OCI-LY7 (cell line): ENCODE measurements at regions of chr22 and their contacts with region 1.

Region 1: GRCh38 chr22:39532215-39533071 is at the start of gene RPS19BP1:
- DNase-seq: peak; percentile 100
- H3K4me3 ChIP-seq: peak within 1 kb of the TSS; percentile 97
- H3K27ac ChIP-seq: peak within 1 kb of the TSS; percentile 66
- H3K4me1 ChIP-seq: peaks cover 57% of the 10 kb centered on the region
- CTCF ChIP-seq: no peak
- total RNA-seq, gene RPS19BP1: 148 and 185 TPM in 2 replicates

Region 2: DNA sequence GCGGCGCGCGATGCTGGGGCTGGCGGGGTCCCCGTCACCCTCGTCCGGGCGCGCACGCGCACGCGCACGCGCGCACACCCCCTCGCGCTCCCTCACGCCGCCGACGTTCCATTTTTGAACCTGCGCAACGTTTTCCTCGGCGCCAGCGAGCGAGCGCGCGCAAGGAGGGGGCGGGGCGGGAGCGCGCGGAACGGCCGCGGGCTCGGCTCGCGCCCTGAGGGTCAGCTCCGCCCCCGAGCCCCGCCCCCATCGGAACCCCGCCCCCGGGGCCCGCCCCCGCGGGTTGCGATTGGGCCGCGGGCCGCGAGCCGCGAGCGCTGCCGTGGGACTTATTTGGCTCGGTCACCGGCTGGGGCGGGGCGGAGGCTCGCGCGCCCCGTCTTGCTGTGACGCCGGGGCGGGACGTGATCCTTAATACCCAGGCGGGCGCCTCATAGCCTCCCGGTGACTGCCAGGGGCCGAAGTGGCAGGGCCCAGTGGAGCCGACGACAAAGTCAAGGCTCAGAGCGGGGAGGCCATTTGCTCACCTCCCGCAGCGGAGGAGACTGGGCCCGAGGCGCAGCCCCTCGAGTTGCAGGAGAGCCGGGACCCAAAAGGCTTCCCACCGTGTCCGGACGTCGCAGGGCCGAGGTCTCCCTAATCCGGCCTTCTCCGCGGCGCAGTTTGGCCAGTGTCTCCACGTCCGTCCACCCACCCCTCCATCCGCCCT is 379.8 kb before region 1 on chr22 and contains the start of gene CBX7:
- CTCF ChIA-PET with region 1: no interaction called
- POLR2A ChIA-PET with region 1: interaction called, 3 read pairs
- intact Hi-C with region 1: loop called (anchors 5 kb)
- DNase-seq: peak; percentile 91
- H3K4me3 ChIP-seq: peak within 1 kb of the TSS; percentile 74
- H3K27ac ChIP-seq: peak within 1 kb of the TSS; percentile 56
- H3K4me1 ChIP-seq: peaks cover 45% of the 10 kb centered on the region
- CTCF ChIP-seq: no peak
- total RNA-seq, gene CBX7: 7.3 and 11.9 TPM in 2 replicates

Region 3: DNA sequence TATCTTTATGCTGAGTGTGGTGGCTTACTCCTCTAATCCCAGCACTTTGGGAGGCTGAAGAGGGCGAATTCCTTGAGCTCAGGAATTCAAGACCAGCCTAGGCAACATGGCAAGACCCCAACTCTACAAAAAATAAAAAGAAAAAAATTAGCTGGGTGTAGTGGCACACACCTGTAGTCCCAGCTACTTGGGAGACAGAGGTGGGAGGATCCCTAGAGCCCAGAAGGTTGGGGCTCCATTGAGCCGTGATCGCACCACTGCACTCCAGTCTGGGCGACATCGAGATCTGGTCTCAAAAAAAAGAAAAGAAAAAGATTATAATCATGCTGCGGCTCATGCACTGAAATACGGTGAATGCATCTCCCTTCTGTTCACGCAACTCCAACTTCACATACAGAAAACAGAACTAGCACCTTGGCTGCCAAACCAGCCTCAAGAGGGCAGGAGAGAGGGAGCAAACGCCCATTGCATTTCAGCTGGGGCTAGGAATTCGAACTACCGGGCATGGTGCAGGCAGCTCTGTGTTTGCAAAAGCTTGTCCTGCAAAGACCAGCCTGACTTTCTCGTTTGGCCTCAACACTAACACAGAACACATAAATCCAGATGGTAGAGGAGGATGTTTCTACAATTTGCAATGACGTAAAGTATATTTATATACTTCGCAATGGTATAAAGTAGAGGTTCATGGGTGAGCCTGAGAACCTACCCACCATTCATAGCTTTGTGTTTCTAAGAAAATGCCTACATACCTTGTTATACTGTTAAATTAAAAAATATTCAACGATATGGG is 189.0 kb before region 1 on chr22:
- CTCF ChIA-PET with region 1: interaction called, 3 read pairs
- POLR2A ChIA-PET with region 1: no interaction called
- intact Hi-C with region 1: loop called (anchors 5 kb)
- DNase-seq: peak; percentile 69
- H3K4me3 ChIP-seq: no peak overlapping the region
- H3K27ac ChIP-seq: no peak overlapping the region
- H3K4me1 ChIP-seq: peaks cover 5% of the 10 kb centered on the region
- CTCF ChIP-seq: peak; percentile 92

Region 4: GRCh38 chr22:39428578-39429071 is 103.8 kb before region 1 on chr22:
- CTCF ChIA-PET with region 1: no interaction called
- POLR2A ChIA-PET with region 1: no interaction called
- intact Hi-C with region 1: no loop called
- DNase-seq: no peak
- H3K4me3 ChIP-seq: no peak overlapping the region
- H3K27ac ChIP-seq: no peak overlapping the region
- H3K4me1 ChIP-seq: no peaks in the 10 kb centered on the region
- CTCF ChIP-seq: no peak

Region 5: DNA sequence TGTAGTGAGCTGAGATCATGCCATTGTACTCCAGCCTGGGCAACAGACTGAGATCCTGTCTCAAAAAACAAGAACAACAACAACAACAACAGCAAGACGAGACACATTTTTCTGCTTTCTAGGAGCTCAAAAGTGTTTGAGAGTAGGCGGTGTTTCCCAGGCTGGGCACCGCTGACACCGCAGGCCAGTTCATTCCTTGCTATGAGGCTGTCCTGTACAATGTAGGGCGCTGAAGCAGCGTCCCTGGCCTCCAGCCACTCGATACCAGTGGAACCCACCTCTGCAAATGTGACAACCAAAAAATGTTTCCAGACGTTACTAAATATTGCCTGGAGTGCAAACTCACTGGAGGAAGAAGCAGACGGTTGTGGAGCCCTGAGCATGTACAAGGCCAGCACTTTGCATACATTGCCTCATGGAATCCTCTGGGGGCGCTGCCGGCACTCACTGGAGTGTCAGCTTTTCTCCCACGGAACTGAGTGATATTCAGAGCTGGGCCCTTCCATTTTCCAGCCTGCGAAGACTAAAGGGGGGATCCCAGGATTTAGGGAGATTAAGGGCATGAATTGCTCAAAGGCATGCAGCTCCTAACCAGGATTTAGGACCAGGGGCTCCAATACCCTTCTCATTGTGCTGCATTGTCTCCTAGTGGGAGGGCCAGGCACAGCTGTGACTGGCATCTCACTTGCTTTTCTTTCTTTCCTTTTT is 36.2 kb before region 1 on chr22:
- CTCF ChIA-PET with region 1: interaction called, 17 read pairs
- POLR2A ChIA-PET with region 1: interaction called, 8 read pairs
- intact Hi-C with region 1: loop called (anchors 1 kb)
- DNase-seq: peak; percentile 71
- H3K4me3 ChIP-seq: no peak overlapping the region
- H3K27ac ChIP-seq: no peak overlapping the region
- H3K4me1 ChIP-seq: peaks cover 15% of the 10 kb centered on the region
- CTCF ChIP-seq: peak; percentile 93

Region 6: DNA sequence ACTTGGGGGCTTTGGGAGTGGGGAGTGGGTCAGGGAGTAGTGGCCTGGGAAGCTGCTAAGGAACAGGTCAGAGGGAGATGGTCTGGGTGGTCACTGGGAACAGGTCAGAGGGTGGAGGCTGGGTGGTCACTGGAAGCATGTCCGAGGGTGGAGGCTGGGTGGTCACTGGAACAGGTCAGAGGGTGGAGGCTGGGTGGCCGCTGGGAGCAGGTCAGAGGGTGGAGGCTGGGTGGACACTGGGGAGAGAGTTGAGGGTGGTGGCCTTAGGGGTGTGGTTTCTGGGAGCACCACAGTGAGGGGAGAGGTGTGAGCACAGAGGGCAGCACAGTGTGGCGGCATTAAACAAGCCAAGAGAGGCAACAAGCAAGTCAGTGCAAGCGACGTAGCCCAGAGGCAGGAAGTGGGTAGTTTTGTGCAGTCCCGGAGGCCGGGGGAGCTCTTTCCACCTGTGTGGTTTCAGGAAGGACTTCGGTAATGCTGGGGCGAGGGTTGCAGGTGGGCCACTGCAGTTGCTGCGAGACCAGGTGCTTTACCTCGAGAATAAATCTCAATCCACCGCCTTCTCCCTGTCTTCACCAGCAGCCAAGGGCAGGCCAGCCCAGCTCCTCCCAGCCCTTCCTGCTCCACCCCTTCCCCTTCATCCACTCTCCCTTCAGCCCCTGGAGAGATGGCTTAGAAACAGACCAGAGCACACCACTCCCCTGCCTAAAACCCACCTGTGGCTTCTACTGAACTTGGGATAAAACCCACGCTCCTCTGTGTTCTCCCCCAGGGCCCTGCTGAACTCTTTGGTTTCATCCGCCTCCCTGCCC is 34.9 kb after region 1 on chr22:
- CTCF ChIA-PET with region 1: no interaction called
- POLR2A ChIA-PET with region 1: no interaction called
- intact Hi-C with region 1: no loop called
- DNase-seq: peak; percentile 77
- H3K4me3 ChIP-seq: no peak overlapping the region
- H3K27ac ChIP-seq: peak overlapping the region; percentile 28
- H3K4me1 ChIP-seq: peaks cover 28% of the 10 kb centered on the region
- CTCF ChIP-seq: 0 out of 2 replicates have a peak, but pooled peaks have one; percentile 23

Region 7: GRCh38 chr22:40024201-40025061 is 492.0 kb after region 1 on chr22:
- CTCF ChIA-PET with region 1: no interaction called
- POLR2A ChIA-PET with region 1: no interaction called
- intact Hi-C with region 1: loop called (anchors 1 kb)
- DNase-seq: peak; percentile 82
- H3K4me3 ChIP-seq: no peak overlapping the region
- H3K27ac ChIP-seq: no peak overlapping the region
- H3K4me1 ChIP-seq: peaks cover 25% of the 10 kb centered on the region
- CTCF ChIP-seq: peak; percentile 97

Region 8: GRCh38 chr22:40346178-40347118 is 814.0 kb after region 1 on chr22 and contains the start of gene ADSL:
- CTCF ChIA-PET with region 1: no interaction called
- POLR2A ChIA-PET with region 1: no interaction called
- intact Hi-C with region 1: loop called (anchors 2 kb)
- DNase-seq: peak; percentile 91
- H3K4me3 ChIP-seq: peak within 1 kb of the TSS; percentile 80
- H3K27ac ChIP-seq: peak within 1 kb of the TSS; percentile 96
- H3K4me1 ChIP-seq: peaks cover 29% of the 10 kb centered on the region
- CTCF ChIP-seq: no peak
- total RNA-seq, gene ADSL: 117 and 141 TPM in 2 replicates